Right lobe of liver (tissue), 6 donors: ENCODE measurements at regions of chr3 and their contacts with region 1.

Region 1: DNA sequence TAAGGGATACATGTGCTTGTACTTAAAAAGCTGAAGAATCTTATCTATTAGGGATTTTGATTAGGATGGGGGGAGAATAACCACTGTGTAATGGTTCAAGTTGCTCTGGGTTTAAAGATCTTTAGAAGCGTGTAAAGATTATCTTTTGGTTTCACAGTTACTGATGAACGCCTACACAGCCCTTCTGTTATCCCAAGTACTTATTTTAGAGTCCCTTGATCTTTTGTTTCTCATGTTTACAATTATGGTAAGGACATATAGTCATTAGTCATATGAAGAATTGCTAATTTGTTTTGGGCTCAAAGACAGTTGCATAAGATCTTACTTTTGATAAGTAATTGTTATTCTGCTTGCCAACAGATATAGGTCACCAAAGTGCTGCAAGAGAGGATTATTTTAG is 160.1 kb downstream of the PLCL2 start:
- DNase-seq: no peak
- ATAC-seq: no peak
- H3K4me3 ChIP-seq: no peak overlapping the region
- H3K27ac ChIP-seq: no peak overlapping the region
- H3K4me1 ChIP-seq: no peaks in the 10 kb centered on the region
- H3K27me3 ChIP-seq: no peaks in the 10 kb centered on the region
- CTCF ChIP-seq: no peak
- POLR2A ChIP-seq: no peak

Region 2: DNA sequence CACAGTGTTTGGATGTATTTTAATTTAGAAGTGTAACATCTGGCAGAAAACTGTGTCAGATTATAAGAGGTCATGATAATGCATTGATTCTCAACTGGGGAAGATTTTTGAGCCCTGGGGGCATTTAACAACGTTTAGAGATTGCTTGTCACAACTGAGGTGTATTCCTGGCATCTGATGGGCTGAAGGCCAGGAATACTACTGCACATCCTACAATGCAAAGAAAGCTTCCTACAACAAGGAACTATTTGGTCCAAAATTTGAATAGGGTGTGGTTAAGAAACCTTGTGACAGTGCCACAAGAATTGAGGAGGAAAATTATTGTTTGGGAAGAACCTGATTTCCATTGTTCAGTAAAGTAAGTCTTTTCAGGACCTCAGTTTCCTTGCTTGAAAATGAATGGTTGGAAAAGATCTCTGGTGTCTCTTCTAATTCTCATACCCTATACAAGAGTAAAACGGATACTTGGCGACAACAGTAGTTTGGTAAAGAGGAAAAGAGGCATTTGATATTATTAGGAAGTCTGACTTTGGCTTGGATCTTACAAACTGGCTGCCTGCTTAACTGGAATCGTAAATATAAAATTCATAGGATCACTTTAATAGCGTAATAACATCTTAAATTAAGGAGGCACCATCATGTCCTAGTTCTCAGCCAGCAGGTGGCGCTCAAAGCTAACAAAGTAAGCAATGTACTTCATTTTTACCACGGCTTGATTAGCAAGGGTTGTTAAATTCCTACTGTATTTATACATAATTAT is 443.9 kb before region 1 on chr3:
- intact Hi-C with region 1: loop called in 1 of 2 experiments (anchors 10 kb)
- DNase-seq: peak; percentile 73 to 81 (median 79)
- ATAC-seq: peak; percentile 66 to 81 (median 78)
- H3K4me3 ChIP-seq: no peak overlapping the region
- H3K27ac ChIP-seq: no peak overlapping the region
- H3K4me1 ChIP-seq: no peaks in the 10 kb centered on the region
- H3K27me3 ChIP-seq: no peaks in the 10 kb centered on the region
- CTCF ChIP-seq: peak; percentile 82 to 89 (median 87)
- POLR2A ChIP-seq: no peak